CD4-positive, alpha-beta memory T cell (primary cell): ENCODE measurements at regions of chr11 and their contacts with region 1.

Region 1: GRCh38 chr11:76380967-76381719 is at the starts of genes GVQW3 and THAP12:
- DNase-seq: peak; percentile 97 to 99 (median 98)
- H3K4me3 ChIP-seq: peak within 1 kb of the TSS; percentile 82 to 86
- H3K4me3 Mint-ChIP-seq: peak within 1 kb of the TSS; percentile 94 to 99 (median 98)
- H3K27ac ChIP-seq: peak within 1 kb of the TSS; percentile 68
- H3K27ac Mint-ChIP-seq: peak within 1 kb of the TSS; percentile 88 to 96 (median 95)
- H3K4me1 ChIP-seq: peaks cover 56% of the 10 kb centered on the region
- H3K4me1 Mint-ChIP-seq: peaks cover 41 to 68% (median 58%) of the 10 kb centered on the region in 4 donors
- H3K27me3 ChIP-seq: no peaks in the 10 kb centered on the region
- H3K27me3 Mint-ChIP-seq: no peaks in the 10 kb centered on the region
- total RNA-seq, gene GVQW3: 8.7 to 10.1 TPM
- total RNA-seq, gene THAP12: 53.7 to 57.3 TPM

Region 2: DNA sequence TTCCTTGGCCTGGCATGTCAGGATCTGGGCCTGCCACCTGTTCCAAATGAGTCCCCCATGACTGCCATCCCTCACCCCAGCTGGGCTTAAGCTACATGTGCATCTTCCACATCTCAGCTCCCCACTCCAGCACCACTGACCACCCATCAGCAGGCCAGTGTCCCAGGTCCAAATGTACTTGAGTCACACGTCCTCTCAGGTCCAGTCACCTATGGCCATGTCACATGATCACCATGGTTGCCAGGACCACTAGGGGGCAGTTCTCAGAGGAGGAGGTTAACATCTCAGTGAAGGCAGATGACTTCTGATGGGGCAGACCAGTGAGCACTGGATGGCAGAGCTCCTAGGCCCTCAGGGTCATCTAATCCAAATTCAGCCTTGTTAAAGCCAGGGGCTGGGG is 132.9 kb before region 1 on chr11:
- CTCF ChIA-PET with region 1: no interaction called
- POLR2A ChIA-PET with region 1: no interaction called
- intact Hi-C with region 1: no loop called
- DNase-seq: no peak
- H3K4me3 ChIP-seq: no peak overlapping the region
- H3K4me3 Mint-ChIP-seq: no peak overlapping the region
- H3K27ac ChIP-seq: no peak overlapping the region
- H3K27ac Mint-ChIP-seq: no peak overlapping the region
- H3K4me1 ChIP-seq: no peaks in the 10 kb centered on the region
- H3K4me1 Mint-ChIP-seq: peaks cover 0 to 3% (median 0%) of the 10 kb centered on the region in 4 donors
- H3K27me3 ChIP-seq: no peaks in the 10 kb centered on the region
- H3K27me3 Mint-ChIP-seq: peaks cover 2 to 7% of the 10 kb centered on the region in 2 donors

Region 3: GRCh38 chr11:76444384-76445123 is 63.4 kb after region 1 on chr11 and contains the start of gene EMSY:
- CTCF ChIA-PET with region 1: no interaction called
- POLR2A ChIA-PET with region 1: interaction called, 4 read pairs
- intact Hi-C with region 1: loop called (anchors 1 kb)
- DNase-seq: peak; percentile 92 to 96 (median 94)
- H3K4me3 ChIP-seq: peak within 1 kb of the TSS; percentile 78 to 84
- H3K4me3 Mint-ChIP-seq: peak within 1 kb of the TSS; percentile 90 to 97 (median 97)
- H3K27ac ChIP-seq: peak within 1 kb of the TSS; percentile 92
- H3K27ac Mint-ChIP-seq: peak within 1 kb of the TSS; percentile 94 to 98 (median 98)
- H3K4me1 ChIP-seq: peaks cover 30% of the 10 kb centered on the region
- H3K4me1 Mint-ChIP-seq: peaks cover 25 to 40% (median 34%) of the 10 kb centered on the region in 4 donors
- H3K27me3 ChIP-seq: no peaks in the 10 kb centered on the region
- H3K27me3 Mint-ChIP-seq: no peaks in the 10 kb centered on the region
- total RNA-seq, gene EMSY: 46.3 to 52.9 TPM

Region 4: GRCh38 chr11:76524919-76525318 is 143.8 kb after region 1 on chr11:
- CTCF ChIA-PET with region 1: no interaction called
- POLR2A ChIA-PET with region 1: no interaction called
- intact Hi-C with region 1: no loop called
- DNase-seq: no peak
- H3K4me3 ChIP-seq: no peak overlapping the region
- H3K4me3 Mint-ChIP-seq: no peak overlapping the region
- H3K27ac ChIP-seq: no peak overlapping the region
- H3K27ac Mint-ChIP-seq: no peak overlapping the region
- H3K4me1 ChIP-seq: no peaks in the 10 kb centered on the region
- H3K4me1 Mint-ChIP-seq: no peaks in the 10 kb centered on the region
- H3K27me3 ChIP-seq: no peaks in the 10 kb centered on the region
- H3K27me3 Mint-ChIP-seq: no peaks in the 10 kb centered on the region